IMR-90 (cell line): ENCODE measurements at regions of chr14 and their contacts with region 1.

Region 1: GRCh38 chr14:48075487-48075886 is 400.1 kb upstream of the MDGA2 start:
- DNase-seq: no peak
- ATAC-seq: no peak
- H3K4me3 ChIP-seq: no peak overlapping the region
- H3K27ac ChIP-seq: no peak overlapping the region
- H3K4me1 ChIP-seq: no peaks in the 10 kb centered on the region
- H3K27me3 ChIP-seq: no peaks in the 10 kb centered on the region
- CTCF ChIP-seq: no peak
- POLR2A ChIP-seq: no peak
- RAD21 ChIP-seq: no peak

Region 2: DNA sequence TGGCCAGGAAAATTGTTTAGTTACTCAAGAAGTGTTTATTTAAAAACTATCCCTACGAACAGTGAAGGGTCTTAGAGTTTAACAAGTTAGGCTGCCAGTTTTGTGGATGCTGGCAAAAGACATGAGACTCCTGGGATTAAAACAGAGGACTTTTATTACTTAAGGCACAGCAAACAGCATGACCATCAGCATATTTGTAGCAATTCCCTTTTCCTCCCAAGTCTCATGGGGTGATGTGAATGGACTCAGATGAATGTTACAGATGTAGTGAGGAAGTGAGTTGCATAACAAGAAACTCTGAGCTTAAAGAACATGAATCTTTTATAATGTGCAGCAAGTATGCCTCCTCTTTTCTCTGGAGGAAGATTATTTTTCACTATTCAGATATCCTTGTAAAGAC is 814.8 kb after region 1 on chr14:
- CTCF ChIA-PET with region 1: no interaction called
- POLR2A ChIA-PET with region 1: no interaction called
- dilution Hi-C with region 1: no loop called
- in situ Hi-C with region 1: no loop called
- intact Hi-C with region 1: loop called (anchors 10 kb)
- DNase-seq: peak; percentile 0
- ATAC-seq: no peak
- H3K4me3 ChIP-seq: no peak overlapping the region
- H3K27ac ChIP-seq: no peak overlapping the region
- H3K4me1 ChIP-seq: no peaks in the 10 kb centered on the region
- H3K27me3 ChIP-seq: no peaks in the 10 kb centered on the region
- CTCF ChIP-seq: no peak
- POLR2A ChIP-seq: no peak
- RAD21 ChIP-seq: no peak